CD4-positive, alpha-beta T cell (primary cell): ENCODE measurements at regions of chr12 and their contacts with region 1.

Region 1: DNA sequence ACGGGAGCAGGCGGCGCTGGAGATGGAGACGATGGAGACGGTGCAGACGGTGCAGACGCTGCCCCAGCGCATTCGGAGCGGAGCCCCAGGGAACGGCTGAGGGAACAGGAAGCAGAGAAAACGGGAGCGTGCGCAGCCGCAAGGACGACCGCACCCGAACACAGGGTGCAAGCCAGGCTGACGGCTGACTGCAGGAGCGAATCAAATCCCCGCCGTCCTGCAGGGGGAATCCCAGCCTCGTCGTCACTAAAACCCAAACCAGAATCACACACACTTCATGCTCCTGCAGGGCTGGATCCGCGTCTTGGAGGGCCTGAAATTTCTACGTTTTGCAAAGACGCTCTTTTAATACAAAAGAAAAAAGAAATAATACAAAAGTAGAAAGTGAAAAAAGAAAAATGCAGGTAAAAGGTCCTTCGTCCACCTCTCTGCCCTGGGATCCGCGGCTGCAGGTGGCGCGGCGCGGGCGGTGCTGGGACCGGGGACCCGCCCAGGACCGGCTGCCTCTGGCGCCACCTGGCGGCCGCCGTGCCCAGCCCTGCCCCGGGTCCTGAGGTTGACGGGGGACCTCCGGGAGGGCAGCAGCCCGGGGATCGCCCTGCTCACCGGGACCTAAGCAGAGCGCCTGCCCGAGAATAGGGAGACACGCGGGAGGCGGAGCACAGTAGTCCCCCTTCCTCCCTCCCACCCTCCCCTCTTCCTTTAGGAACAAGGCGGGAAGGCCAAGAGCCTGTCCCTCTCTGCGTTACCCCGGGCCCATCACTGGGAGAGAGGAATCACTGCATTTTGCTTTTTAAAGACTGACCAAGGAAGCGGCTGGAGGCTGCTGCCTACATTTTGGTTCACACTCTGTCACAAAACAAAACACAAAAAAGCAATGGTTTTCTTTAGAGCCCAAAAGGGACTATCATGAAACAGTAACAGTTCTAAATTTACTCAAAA is 20.1 kb downstream of the STX2 start:
- DNase-seq: peak; percentile 63 to 89 (median 70)
- ATAC-seq: peak; percentile 88
- H3K4me3 ChIP-seq: peak overlapping the region; percentile 75
- H3K4me3 Mint-ChIP-seq: peak overlapping the region; percentile 90
- H3K27ac ChIP-seq: peak overlapping the region in 1 of 2 donors; percentile 48
- H3K27ac Mint-ChIP-seq: peak overlapping the region; percentile 85
- H3K4me1 ChIP-seq: peaks cover 11% of the 10 kb centered on the region
- H3K4me1 Mint-ChIP-seq: peaks cover 23% of the 10 kb centered on the region
- H3K27me3 ChIP-seq: no peaks in the 10 kb centered on the region
- H3K27me3 Mint-ChIP-seq: no peaks in the 10 kb centered on the region
- CTCF ChIP-seq: peak; percentile 92

Region 2: DNA sequence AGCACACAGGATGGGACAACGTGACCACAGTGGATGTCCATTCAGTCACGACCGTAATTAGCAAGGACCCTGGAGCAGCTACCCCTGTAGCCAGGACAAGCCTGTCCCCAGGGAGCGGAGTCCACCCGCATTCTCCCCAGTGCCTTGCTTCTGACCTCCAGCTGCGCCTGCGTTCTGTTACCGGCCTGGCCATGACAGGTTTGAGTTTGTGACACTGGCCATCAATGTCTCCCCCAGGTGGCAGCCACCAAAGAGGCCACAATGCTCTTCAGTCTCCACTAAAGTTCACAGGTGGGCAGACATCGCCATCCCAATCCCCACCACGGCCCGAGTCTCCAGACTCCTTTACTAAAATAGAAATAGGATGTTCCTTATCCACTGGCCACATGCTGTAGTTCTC is 1011.8 kb before region 1 on chr12:
- CTCF ChIA-PET with region 1: no interaction called
- POLR2A ChIA-PET with region 1: no interaction called
- intact Hi-C with region 1: no loop called
- DNase-seq: no peak
- ATAC-seq: no peak
- H3K4me3 ChIP-seq: no peak overlapping the region
- H3K4me3 Mint-ChIP-seq: no peak overlapping the region
- H3K27ac ChIP-seq: no peak overlapping the region
- H3K27ac Mint-ChIP-seq: no peak overlapping the region
- H3K4me1 ChIP-seq: no peaks in the 10 kb centered on the region
- H3K4me1 Mint-ChIP-seq: no peaks in the 10 kb centered on the region
- H3K27me3 ChIP-seq: no peaks in the 10 kb centered on the region
- H3K27me3 Mint-ChIP-seq: no peaks in the 10 kb centered on the region
- CTCF ChIP-seq: no peak

Region 3: DNA sequence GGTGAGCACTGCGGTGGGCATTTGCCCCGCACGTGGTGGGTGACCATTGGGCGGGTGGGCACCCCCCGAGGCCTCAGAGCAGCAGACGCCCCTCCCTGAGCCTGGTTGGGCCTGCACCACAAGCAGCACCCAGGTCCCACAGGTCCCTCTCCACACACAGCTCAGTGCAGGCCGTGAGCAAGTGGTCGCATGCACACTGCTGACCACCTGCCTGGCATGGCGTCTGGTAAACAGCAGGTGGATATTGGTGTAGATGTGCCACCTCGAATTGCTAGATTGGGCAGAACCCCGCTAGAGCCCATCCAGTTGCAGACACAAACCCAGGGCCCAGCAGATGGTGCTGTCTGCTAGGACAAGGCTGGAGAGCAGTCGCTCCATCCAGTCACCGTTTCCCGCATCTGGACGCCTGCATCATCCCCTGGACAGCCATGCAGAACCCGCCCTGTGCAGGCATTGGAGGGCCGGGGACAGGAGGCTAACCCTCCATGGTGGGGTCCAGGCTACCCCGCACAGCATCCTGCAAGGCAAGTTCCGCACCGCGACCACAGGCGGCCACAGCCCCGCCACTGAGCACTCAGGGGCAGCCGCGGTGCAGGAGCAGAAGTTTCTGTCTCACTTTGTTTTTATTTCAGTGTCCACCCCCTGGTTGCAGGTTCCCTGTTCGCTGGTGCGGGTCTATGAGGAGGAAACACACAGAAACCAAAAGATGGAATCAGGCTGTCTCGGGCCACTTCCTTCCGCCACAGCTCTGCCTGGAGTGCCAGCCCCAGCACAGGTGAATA is 57.2 kb before region 1 on chr12:
- CTCF ChIA-PET with region 1: no interaction called
- POLR2A ChIA-PET with region 1: no interaction called
- intact Hi-C with region 1: loop called (anchors 1 kb)
- DNase-seq: peak; percentile 26 to 73 (median 51)
- ATAC-seq: peak; percentile 69
- H3K4me3 ChIP-seq: peak overlapping the region; percentile 47
- H3K4me3 Mint-ChIP-seq: peak overlapping the region; percentile 72
- H3K27ac ChIP-seq: no peak overlapping the region
- H3K27ac Mint-ChIP-seq: no peak overlapping the region
- H3K4me1 ChIP-seq: peaks cover 29% of the 10 kb centered on the region
- H3K4me1 Mint-ChIP-seq: peaks cover 5% of the 10 kb centered on the region
- H3K27me3 ChIP-seq: peaks cover 6 to 13% of the 10 kb centered on the region in 2 experiments
- H3K27me3 Mint-ChIP-seq: peaks cover 20% of the 10 kb centered on the region
- CTCF ChIP-seq: peak; percentile 58

Region 4: DNA sequence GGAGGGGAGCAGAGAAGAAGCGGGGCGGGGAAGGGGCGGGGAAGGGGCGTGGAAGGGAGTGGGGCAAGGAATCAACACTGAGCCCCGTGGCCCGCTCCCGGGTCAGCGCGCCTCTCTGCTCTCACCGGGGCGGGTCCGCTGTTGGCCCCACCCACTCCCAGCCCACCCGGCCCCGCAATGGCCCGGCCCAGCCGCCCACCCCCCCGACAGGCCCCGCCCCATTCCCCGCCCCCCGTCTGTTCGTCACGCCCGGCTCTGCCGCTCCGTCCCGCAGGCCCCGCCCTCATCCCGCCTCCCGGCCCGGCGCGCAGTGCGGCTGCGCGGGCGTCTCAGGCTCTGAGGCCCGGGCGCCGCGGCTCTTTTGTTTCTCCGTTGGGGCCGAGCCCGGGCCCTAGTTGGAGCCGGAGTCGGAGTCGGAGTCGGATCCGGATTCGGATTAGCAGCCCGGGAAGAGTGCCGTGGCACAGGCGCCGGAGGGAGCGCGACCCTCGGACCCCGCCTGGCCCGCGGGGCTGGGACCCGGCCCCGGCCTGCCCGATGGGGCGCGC is 1075.5 kb after region 1 on chr12 and contains the start of gene ULK1:
- CTCF ChIA-PET with region 1: no interaction called
- POLR2A ChIA-PET with region 1: no interaction called
- intact Hi-C with region 1: no loop called
- DNase-seq: peak; percentile 83 to 96 (median 92)
- ATAC-seq: peak; percentile 82
- H3K4me3 ChIP-seq: peak within 1 kb of the TSS; percentile 71
- H3K4me3 Mint-ChIP-seq: peak within 1 kb of the TSS; percentile 93
- H3K27ac ChIP-seq: peak within 1 kb of the TSS in 1 of 2 donors; percentile 13
- H3K27ac Mint-ChIP-seq: peak within 1 kb of the TSS; percentile 88
- H3K4me1 ChIP-seq: peaks cover 31% of the 10 kb centered on the region
- H3K4me1 Mint-ChIP-seq: peaks cover 25% of the 10 kb centered on the region
- H3K27me3 ChIP-seq: no peaks in the 10 kb centered on the region
- H3K27me3 Mint-ChIP-seq: no peaks in the 10 kb centered on the region
- CTCF ChIP-seq: no peak
- total RNA-seq, gene ULK1: 85.0 to 91.6 TPM